GM12878 (cell line): ENCODE measurements at regions of chr12 and their contacts with region 1.

Region 1: GRCh38 chr12:102745971-102746600 is 171.0 kb downstream of the PAH start:
- DNase-seq: no peak
- ATAC-seq: no peak
- H3K4me3 ChIP-seq: no peak overlapping the region
- H3K27ac ChIP-seq: no peak overlapping the region
- H3K4me1 ChIP-seq: no peaks in the 10 kb centered on the region
- H3K27me3 ChIP-seq: no peaks in the 10 kb centered on the region
- CTCF ChIP-seq: no peak
- EP300 ChIP-seq: no peak
- POLR2A ChIP-seq: no peak
- RAD21 ChIP-seq: no peak

Region 2: DNA sequence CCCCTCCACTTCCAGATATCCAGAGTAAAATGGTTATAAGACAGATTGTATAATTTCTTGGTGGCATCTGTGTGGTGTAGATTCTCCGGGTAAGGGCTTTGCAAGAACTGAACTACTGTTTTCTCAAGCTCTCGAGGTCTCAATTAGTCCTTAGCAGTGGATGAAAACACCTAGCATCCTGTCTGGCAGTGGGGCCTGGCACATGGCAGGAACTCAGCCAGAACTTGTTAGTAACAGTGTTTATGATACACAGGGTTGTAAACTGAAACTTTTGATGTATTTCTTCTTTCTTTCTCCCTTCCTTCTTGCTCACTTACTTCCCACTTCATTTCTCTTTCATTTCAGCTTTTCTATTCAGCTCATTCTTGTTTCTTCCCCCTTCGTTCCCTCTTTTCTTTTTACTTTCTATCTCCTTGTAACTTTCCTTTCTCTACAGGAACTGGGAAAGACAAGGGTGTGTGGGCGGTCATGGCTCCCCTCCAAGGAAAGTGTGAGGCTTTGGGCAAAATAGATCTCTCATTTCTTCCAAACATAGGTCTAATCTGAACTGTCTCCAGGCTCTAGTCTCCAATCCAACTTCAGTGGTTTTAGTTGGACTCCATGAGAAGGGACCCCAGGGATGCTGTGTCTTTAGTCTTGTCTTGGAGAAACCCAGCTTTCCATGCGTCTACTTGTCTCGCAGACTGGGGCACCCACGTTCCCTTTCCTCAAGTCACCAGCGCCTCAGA is 11.2 kb after region 1 on chr12:
- CTCF ChIA-PET with region 1: interaction called, 28 read pairs
- POLR2A ChIA-PET with region 1: no interaction called
- RAD21 ChIA-PET with region 1: interaction called, 19 read pairs
- SMC1A ChIA-PET with region 1: interaction called, 32 read pairs
- in situ Hi-C with region 1: no loop called
- intact Hi-C with region 1: no loop called
- DNase-seq: no peak
- ATAC-seq: no peak
- H3K4me3 ChIP-seq: no peak overlapping the region
- H3K27ac ChIP-seq: no peak overlapping the region
- H3K4me1 ChIP-seq: no peaks in the 10 kb centered on the region
- H3K27me3 ChIP-seq: no peaks in the 10 kb centered on the region
- CTCF ChIP-seq: no peak
- EP300 ChIP-seq: no peak
- POLR2A ChIP-seq: no peak
- RAD21 ChIP-seq: no peak